Caco-2 (cell line): ENCODE measurements at regions of chr17 and their contacts with region 1.

Region 1: GRCh38 chr17:50478391-50479381 is at the start of gene RSAD1:
- DNase-seq: peak; percentile 98 to 99
- H3K4me3 ChIP-seq: peak within 1 kb of the TSS; percentile 70
- H3K4me3 Mint-ChIP-seq: peak within 1 kb of the TSS; percentile 78
- H3K27ac Mint-ChIP-seq: peak within 1 kb of the TSS; percentile 90
- H3K4me1 ChIP-seq: peaks cover 22% of the 10 kb centered on the region
- H3K4me1 Mint-ChIP-seq: peaks cover 50% of the 10 kb centered on the region
- H3K27me3 ChIP-seq: no peaks in the 10 kb centered on the region
- H3K27me3 Mint-ChIP-seq: no peaks in the 10 kb centered on the region
- CTCF ChIP-seq: peak; percentile 80 to 99
- total RNA-seq, gene RSAD1: 85.3 and 93.9 TPM in 2 replicates

Region 2: DNA sequence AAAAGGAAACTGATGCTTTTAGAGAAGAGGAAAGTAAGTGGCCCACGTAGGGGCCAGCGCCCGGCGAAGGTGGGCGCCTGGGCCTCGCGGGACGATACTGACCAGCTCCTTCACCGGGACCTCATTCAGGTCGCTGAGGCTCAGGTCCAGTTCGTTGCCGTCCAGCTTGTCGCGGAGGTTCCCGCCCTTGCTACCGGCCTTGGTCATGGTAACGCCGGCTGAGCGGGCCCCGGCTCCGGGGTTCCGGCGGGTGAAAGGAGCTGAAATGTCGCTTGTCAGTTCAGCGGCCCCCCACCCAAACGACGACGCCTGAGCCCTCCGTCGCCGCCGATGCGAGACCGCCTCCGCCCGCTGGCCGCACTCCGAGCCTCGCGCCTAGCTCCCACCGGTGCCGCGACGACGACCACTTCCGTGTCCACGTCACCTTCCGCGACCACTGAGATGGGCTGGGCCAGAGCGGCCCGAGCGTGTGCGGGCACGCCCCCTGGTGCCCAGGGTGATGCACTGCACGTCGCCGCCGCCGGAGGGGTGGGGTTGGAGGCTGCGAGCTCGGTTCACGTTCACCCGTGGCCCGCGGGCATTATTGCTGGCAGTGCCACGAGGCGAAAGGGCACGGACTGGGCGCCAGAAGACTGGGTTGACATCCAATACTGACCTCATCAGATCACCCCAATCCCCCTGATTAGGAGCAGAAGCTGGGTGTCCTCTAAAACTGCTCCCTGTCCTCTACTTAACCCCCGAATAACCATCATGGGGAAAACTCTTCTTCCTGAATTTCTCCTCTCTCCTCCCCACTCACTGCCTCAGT is 81.4 kb before region 1 on chr17 and contains the start of gene LRRC59:
- CTCF ChIA-PET with region 1: interaction called, 67 read pairs
- POLR2A ChIA-PET with region 1: interaction called, 17 read pairs
- intact Hi-C with region 1: loop called (anchors 1 kb)
- DNase-seq: peak; percentile 96 to 100
- H3K4me3 ChIP-seq: peak within 1 kb of the TSS; percentile 72
- H3K4me3 Mint-ChIP-seq: peak within 1 kb of the TSS; percentile 76
- H3K27ac Mint-ChIP-seq: peak within 1 kb of the TSS; percentile 71
- H3K4me1 ChIP-seq: peaks cover 5% of the 10 kb centered on the region; the same call in 1 of the 2 replicates
- H3K4me1 Mint-ChIP-seq: peaks cover 12% of the 10 kb centered on the region
- H3K27me3 ChIP-seq: no peaks in the 10 kb centered on the region
- H3K27me3 Mint-ChIP-seq: no peaks in the 10 kb centered on the region
- CTCF ChIP-seq: peak; percentile 100
- total RNA-seq, gene LRRC59: 324 and 336 TPM in 2 replicates

Region 3: DNA sequence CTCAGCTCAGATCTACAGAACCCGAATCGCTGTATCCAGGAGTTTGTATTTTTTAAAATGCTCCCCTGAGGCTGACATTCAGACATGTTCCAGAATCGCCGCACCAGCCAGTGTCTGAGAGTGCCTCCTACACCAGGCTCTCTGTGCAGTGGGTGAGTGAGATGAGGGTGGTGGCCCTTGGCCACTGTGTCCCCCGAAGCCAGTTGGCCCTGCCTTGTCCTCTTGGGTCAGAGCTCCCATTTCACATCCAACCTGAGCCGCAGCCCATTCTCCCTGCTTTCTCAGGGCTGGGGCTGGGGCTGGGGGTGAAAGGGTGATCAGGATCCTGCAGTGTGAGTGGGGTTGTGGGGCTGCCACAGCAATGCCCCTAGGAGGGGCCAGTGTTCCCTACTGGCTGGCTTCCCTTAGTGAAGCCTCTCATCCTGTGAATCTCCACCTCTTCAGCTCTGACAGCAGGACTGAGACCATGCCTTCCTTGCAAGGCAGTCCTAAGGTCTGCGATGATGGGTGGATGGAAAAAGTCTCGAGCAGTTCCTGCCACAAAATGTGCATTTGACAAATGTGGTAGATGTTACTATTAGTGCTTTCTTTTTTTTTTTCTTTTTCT is 16.6 kb after region 1 on chr17:
- CTCF ChIA-PET with region 1: interaction called, 22 read pairs
- POLR2A ChIA-PET with region 1: no interaction called
- intact Hi-C with region 1: no loop called
- DNase-seq: no peak
- H3K4me3 ChIP-seq: no peak overlapping the region
- H3K4me3 Mint-ChIP-seq: no peak overlapping the region
- H3K27ac Mint-ChIP-seq: no peak overlapping the region
- H3K4me1 ChIP-seq: peaks cover 8% of the 10 kb centered on the region
- H3K4me1 Mint-ChIP-seq: peaks cover 8% of the 10 kb centered on the region
- H3K27me3 ChIP-seq: no peaks in the 10 kb centered on the region
- H3K27me3 Mint-ChIP-seq: no peaks in the 10 kb centered on the region
- CTCF ChIP-seq: peak in 1 of 2 experiments; percentile 5

Region 4: DNA sequence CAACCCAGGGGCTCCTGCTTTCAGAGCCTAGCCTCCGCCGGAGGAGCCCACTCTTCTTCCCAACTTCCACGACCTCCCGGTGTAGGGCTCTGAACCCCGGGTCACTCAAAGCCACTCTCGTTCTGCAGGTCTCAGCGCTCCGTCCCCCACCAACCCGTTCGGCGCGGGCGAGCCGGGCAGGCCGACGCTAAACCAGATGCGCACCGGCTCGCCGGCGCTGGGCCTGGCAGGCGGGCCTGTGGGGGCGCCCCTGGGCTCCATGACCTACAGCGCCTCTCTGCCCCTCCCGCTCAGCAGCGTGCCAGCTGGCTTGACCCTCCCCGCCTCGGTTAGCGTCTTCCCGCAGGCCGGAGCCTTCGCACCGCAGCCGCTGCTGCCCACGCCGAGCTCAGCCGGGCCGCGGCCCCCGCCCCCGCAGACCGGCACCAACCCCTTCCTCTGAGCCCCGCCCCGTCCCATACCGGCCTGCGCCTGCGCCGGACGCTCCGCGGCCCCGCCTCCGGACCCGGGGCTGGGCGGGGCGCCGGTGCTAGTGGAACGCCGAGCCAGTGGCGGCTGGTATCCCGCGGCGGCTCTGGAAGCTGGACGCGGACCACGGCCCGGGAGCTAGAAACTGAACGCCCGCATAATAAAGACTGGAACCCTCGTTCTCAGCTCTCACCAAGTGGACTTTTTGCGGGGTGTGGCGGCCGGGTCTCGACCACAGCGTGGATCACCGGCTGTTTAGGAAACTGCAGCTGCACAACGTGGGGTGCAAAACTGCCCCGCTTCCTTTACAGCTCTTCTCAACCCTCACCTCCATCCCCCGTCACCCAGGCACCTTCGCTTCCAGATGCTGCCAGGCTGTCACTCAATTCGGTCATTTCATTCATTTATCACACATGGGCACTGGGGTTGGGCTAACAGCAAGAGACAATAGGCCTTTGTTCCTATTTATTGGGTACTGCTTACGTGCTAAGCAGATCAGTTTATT is 63.3 kb after region 1 on chr17:
- CTCF ChIA-PET with region 1: interaction called, 27 read pairs
- POLR2A ChIA-PET with region 1: interaction called, 11 read pairs
- intact Hi-C with region 1: loop called (anchors 1 kb)
- DNase-seq: peak; percentile 94 to 100
- H3K4me3 ChIP-seq: peak overlapping the region; percentile 45
- H3K4me3 Mint-ChIP-seq: peak overlapping the region; percentile 77
- H3K27ac Mint-ChIP-seq: peak overlapping the region; percentile 39
- H3K4me1 ChIP-seq: peaks cover 66% of the 10 kb centered on the region
- H3K4me1 Mint-ChIP-seq: peaks cover 69% of the 10 kb centered on the region
- H3K27me3 ChIP-seq: no peaks in the 10 kb centered on the region
- H3K27me3 Mint-ChIP-seq: no peaks in the 10 kb centered on the region
- CTCF ChIP-seq: peak; percentile 41 to 57

Region 5: DNA sequence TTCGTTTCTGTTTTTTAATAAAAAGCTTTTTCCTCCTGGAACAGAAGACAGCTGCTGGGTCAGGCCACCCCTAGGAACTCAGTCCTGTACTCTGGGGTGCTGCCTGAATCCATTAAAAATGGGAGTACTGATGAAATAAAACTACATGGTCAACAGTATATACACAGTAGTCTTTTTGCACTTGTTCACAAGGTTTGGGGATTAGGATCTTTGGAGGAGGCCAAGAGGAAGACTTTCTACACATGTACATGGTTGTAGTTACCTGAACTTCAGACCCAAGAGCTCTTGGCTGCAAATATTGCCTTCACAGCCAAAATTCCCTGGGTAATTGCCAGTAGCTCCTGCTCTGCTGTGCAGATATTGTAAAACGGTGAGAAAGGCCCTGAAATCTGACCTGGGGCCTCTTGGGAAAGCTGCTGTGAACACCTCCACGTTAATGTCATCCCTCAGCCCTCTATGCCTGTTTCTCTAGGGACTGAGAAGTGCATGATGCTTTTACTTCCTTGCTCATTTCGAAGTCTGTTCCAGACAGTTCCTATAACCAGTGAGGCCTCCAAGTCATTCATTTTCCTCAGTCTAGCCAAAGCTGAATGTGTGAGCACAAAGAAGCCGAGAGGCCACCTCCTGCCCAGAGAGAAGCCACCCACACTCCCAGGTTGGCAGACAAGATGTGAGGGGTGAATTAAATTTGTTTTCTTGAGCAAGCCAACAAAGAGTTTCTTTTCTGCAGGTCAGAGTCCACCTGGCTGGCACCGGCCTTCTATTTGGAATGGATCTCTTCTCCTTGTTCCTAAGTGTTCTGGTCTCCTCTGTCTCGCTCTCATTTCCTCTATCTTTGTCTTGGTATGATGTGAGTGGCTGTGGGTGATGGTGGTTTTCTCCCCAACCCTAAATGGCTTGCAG is 213.1 kb after region 1 on chr17:
- CTCF ChIA-PET with region 1: interaction called, 39 read pairs
- POLR2A ChIA-PET with region 1: interaction called, 4 read pairs
- intact Hi-C with region 1: loop called (anchors 1 kb)
- DNase-seq: peak in 1 of 2 experiments; percentile 54
- H3K4me3 ChIP-seq: no peak overlapping the region
- H3K4me3 Mint-ChIP-seq: peak overlapping the region; percentile 63
- H3K27ac Mint-ChIP-seq: peak overlapping the region; percentile 88
- H3K4me1 ChIP-seq: peaks cover 86% of the 10 kb centered on the region
- H3K4me1 Mint-ChIP-seq: peaks cover 70% of the 10 kb centered on the region
- H3K27me3 ChIP-seq: no peaks in the 10 kb centered on the region
- H3K27me3 Mint-ChIP-seq: no peaks in the 10 kb centered on the region
- CTCF ChIP-seq: no peak

Region 6: GRCh38 chr17:50872710-50873424 is 394.2 kb after region 1 on chr17:
- CTCF ChIA-PET with region 1: no interaction called
- POLR2A ChIA-PET with region 1: no interaction called
- intact Hi-C with region 1: no loop called
- DNase-seq: no peak
- H3K4me3 ChIP-seq: no peak overlapping the region
- H3K4me3 Mint-ChIP-seq: no peak overlapping the region
- H3K27ac Mint-ChIP-seq: no peak overlapping the region
- H3K4me1 ChIP-seq: peaks cover 8% of the 10 kb centered on the region
- H3K4me1 Mint-ChIP-seq: peaks cover 3% of the 10 kb centered on the region
- H3K27me3 ChIP-seq: no peaks in the 10 kb centered on the region
- H3K27me3 Mint-ChIP-seq: no peaks in the 10 kb centered on the region
- CTCF ChIP-seq: no peak